CD8-positive, alpha-beta T cell (primary cell): ENCODE measurements at regions of chr3 and their contacts with region 1.

Region 1: DNA sequence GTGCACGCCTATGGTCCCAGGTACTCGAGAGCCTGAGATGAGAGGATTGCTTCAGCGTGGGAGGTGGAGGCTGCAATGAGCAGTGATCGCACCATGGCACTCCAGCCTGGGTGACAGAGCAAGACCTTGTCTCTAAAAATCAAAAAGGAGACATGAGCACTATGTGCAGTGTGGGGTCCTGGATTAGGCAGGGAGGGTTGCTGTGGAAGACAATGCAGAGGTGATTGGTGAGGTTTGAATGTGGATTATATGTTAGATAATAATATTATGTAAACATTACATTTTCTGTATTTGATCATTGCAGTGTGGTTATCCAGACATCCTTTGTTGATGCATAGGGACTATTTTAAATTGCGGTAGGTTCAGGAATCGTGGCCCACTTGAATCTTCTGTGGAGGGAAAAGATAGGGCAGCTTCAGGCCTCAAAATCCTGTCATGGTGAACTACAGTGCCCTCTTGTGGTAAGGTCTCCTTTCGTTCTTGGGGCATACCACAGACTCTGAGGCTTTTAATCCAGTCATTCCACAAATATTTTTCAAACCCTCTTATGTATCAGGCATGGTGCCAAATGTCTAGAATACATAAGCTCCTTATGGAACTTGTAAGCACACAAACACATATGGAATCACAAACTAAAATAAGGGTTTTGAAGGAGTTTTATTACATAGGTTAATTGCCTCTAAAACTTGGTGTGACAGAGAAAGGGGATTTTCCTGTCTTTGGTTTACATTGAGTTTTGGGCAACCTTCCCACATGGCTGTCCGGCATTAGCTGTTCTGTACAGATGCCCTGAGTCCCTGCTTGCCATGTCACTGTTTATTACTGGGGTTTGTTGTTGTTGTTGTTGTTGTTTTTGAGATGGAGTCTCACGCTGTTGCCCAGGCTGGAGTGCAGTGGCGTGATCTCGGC is 37.7 kb downstream of the GPD1L start:
- DNase-seq: peak in 8 of 9 experiments; percentile 31 to 78 (median 52)
- ATAC-seq: peak; percentile 56
- H3K4me3 ChIP-seq: no peak overlapping the region
- H3K4me3 Mint-ChIP-seq: no peak overlapping the region
- H3K27ac ChIP-seq: no peak overlapping the region
- H3K27ac Mint-ChIP-seq: no peak overlapping the region
- H3K4me1 ChIP-seq: peaks cover under 1% of the 10 kb centered on the region
- H3K4me1 Mint-ChIP-seq: peaks cover 10% of the 10 kb centered on the region
- H3K27me3 ChIP-seq: no peaks in the 10 kb centered on the region
- H3K27me3 Mint-ChIP-seq: no peaks in the 10 kb centered on the region
- CTCF ChIP-seq: peak; percentile 86

Region 2: GRCh38 chr3:31610700-31611275 is 533.3 kb before region 1 on chr3:
- CTCF ChIA-PET with region 1: no interaction called
- POLR2A ChIA-PET with region 1: no interaction called
- intact Hi-C with region 1: loop called in 1 of 2 experiments (anchors 5 kb)
- DNase-seq: peak in 2 of 9 experiments; percentile 16 to 38
- ATAC-seq: no peak
- H3K4me3 ChIP-seq: no peak overlapping the region
- H3K4me3 Mint-ChIP-seq: no peak overlapping the region
- H3K27ac ChIP-seq: no peak overlapping the region
- H3K27ac Mint-ChIP-seq: peak overlapping the region; percentile 1
- H3K4me1 ChIP-seq: no peaks in the 10 kb centered on the region
- H3K4me1 Mint-ChIP-seq: peaks cover 61% of the 10 kb centered on the region
- H3K27me3 ChIP-seq: no peaks in the 10 kb centered on the region
- H3K27me3 Mint-ChIP-seq: no peaks in the 10 kb centered on the region
- CTCF ChIP-seq: peak; percentile 40

Region 3: GRCh38 chr3:32018757-32019564 is 125.1 kb before region 1 on chr3:
- CTCF ChIA-PET with region 1: interaction called, 93 read pairs
- POLR2A ChIA-PET with region 1: interaction called, 7 read pairs
- intact Hi-C with region 1: loop called (anchors 1 kb)
- DNase-seq: peak in 2 of 9 experiments; percentile 47 to 61
- ATAC-seq: peak; percentile 48
- H3K4me3 ChIP-seq: no peak overlapping the region
- H3K4me3 Mint-ChIP-seq: no peak overlapping the region
- H3K27ac ChIP-seq: no peak overlapping the region
- H3K27ac Mint-ChIP-seq: no peak overlapping the region
- H3K4me1 ChIP-seq: no peaks in the 10 kb centered on the region
- H3K4me1 Mint-ChIP-seq: no peaks in the 10 kb centered on the region
- H3K27me3 ChIP-seq: no peaks in the 10 kb centered on the region
- H3K27me3 Mint-ChIP-seq: peaks cover 2% of the 10 kb centered on the region
- CTCF ChIP-seq: peak; percentile 90

Region 4: DNA sequence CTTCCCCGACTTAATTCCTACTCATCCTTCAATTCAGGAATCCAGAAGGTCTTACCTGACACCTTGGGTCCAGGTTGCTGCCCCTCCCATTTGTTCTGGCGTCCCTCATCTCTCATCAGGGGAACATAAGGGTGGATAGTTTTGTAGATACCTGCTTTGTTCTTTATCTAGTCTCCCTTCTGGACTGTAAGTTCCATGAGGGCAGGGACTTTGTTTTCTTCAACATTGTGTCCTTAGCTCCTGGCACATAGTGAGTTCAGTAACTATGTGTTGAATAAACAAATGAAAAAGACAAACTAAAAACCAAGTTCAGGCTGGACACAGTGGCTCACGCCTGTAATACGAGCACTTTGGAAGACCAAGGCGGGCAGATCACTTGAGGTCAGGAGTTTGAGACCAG is 50.9 kb before region 1 on chr3:
- CTCF ChIA-PET with region 1: no interaction called
- POLR2A ChIA-PET with region 1: no interaction called
- intact Hi-C with region 1: loop called in 1 of 2 experiments (anchors 5 kb)
- DNase-seq: no peak
- ATAC-seq: no peak
- H3K4me3 ChIP-seq: no peak overlapping the region
- H3K4me3 Mint-ChIP-seq: no peak overlapping the region
- H3K27ac ChIP-seq: no peak overlapping the region
- H3K27ac Mint-ChIP-seq: no peak overlapping the region
- H3K4me1 ChIP-seq: peaks cover 7% of the 10 kb centered on the region
- H3K4me1 Mint-ChIP-seq: peaks cover 13% of the 10 kb centered on the region
- H3K27me3 ChIP-seq: no peaks in the 10 kb centered on the region
- H3K27me3 Mint-ChIP-seq: peaks cover 16% of the 10 kb centered on the region
- CTCF ChIP-seq: no peak

Region 5: GRCh38 chr3:32117324-32117723 is 26.8 kb before region 1 on chr3:
- CTCF ChIA-PET with region 1: interaction called, 12 read pairs
- POLR2A ChIA-PET with region 1: interaction called, 4 read pairs
- intact Hi-C with region 1: no loop called
- DNase-seq: no peak
- ATAC-seq: no peak
- H3K4me3 ChIP-seq: no peak overlapping the region
- H3K4me3 Mint-ChIP-seq: no peak overlapping the region
- H3K27ac ChIP-seq: no peak overlapping the region
- H3K27ac Mint-ChIP-seq: no peak overlapping the region
- H3K4me1 ChIP-seq: peaks cover 39% of the 10 kb centered on the region
- H3K4me1 Mint-ChIP-seq: peaks cover 74% of the 10 kb centered on the region
- H3K27me3 ChIP-seq: no peaks in the 10 kb centered on the region
- H3K27me3 Mint-ChIP-seq: no peaks in the 10 kb centered on the region
- CTCF ChIP-seq: no peak

Region 6: GRCh38 chr3:32257639-32258038 is 113.5 kb after region 1 on chr3:
- CTCF ChIA-PET with region 1: no interaction called
- POLR2A ChIA-PET with region 1: no interaction called
- intact Hi-C with region 1: no loop called
- DNase-seq: no peak
- ATAC-seq: no peak
- H3K4me3 ChIP-seq: no peak overlapping the region
- H3K4me3 Mint-ChIP-seq: no peak overlapping the region
- H3K27ac ChIP-seq: no peak overlapping the region
- H3K27ac Mint-ChIP-seq: no peak overlapping the region
- H3K4me1 ChIP-seq: peaks cover 7% of the 10 kb centered on the region
- H3K4me1 Mint-ChIP-seq: peaks cover 6% of the 10 kb centered on the region
- H3K27me3 ChIP-seq: no peaks in the 10 kb centered on the region
- H3K27me3 Mint-ChIP-seq: peaks cover 2% of the 10 kb centered on the region
- CTCF ChIP-seq: no peak

Region 7: DNA sequence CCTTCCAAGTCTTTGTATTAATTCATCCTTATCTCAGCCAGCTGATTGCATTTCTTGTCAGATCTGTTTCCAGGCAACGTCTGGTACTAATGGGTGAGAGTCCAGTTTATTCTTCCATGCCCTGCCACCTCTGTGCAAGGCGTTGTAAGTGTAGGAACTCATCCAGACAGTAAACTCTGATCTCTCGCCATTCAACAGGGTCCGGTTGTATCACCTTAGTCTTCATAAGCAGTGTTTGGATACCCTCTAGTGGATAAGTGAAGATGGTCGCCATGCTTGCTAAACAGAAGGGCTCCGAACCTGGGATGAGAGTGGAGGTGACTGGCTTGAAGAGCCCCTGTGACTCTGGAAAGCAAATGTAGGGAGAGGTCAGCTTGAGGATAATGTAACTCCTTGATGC is 195.9 kb after region 1 on chr3:
- CTCF ChIA-PET with region 1: interaction called, 3 read pairs
- POLR2A ChIA-PET with region 1: no interaction called
- intact Hi-C with region 1: loop called in 1 of 2 experiments (anchors 1 kb)
- DNase-seq: peak in 6 of 9 experiments; percentile 21 to 64 (median 40)
- ATAC-seq: peak; percentile 78
- H3K4me3 ChIP-seq: no peak overlapping the region
- H3K4me3 Mint-ChIP-seq: no peak overlapping the region
- H3K27ac ChIP-seq: no peak overlapping the region
- H3K27ac Mint-ChIP-seq: no peak overlapping the region
- H3K4me1 ChIP-seq: peaks cover 13% of the 10 kb centered on the region
- H3K4me1 Mint-ChIP-seq: peaks cover 17% of the 10 kb centered on the region
- H3K27me3 ChIP-seq: no peaks in the 10 kb centered on the region
- H3K27me3 Mint-ChIP-seq: no peaks in the 10 kb centered on the region
- CTCF ChIP-seq: peak; percentile 66